Tibial artery (tissue), 4 donors: ENCODE measurements at regions of chr2 and their contacts with region 1.

Region 1: GRCh38 chr2:164560181-164560792 is 61.0 kb downstream of the GRB14 start:
- DNase-seq: no peak
- H3K4me3 ChIP-seq: peak overlapping the region in 1 of 2 donors; percentile 5
- H3K27ac ChIP-seq: no peak overlapping the region
- H3K4me1 ChIP-seq: peaks cover 0 to 8% (median 1%) of the 10 kb centered on the region in 4 donors
- H3K27me3 ChIP-seq: no peaks in the 10 kb centered on the region
- CTCF ChIP-seq: peak; percentile 65 to 69

Region 2: DNA sequence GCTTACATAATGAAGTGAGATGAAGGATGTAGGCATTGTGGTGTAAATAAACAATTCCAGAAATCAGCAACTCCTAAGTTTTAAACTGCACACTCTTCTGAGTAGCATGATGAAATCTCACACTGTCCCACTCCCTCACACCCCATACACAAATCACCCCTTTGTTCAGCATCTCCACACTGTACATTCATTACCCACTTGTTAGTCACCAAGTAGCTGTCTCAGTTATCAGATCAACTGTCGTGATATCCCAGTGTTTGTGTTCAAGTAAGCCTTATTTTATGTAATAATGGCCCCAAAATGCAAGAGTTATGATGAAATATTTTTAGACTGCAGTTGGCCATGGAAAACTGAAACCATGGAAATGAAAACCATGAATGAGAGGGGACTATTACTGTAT is 74.7 kb before region 1 on chr2:
- intact Hi-C with region 1: no loop called
- DNase-seq: no peak
- H3K4me3 ChIP-seq: no peak overlapping the region
- H3K27ac ChIP-seq: no peak overlapping the region
- H3K4me1 ChIP-seq: no peaks in the 10 kb centered on the region
- H3K27me3 ChIP-seq: no peaks in the 10 kb centered on the region
- CTCF ChIP-seq: no peak

Region 3: DNA sequence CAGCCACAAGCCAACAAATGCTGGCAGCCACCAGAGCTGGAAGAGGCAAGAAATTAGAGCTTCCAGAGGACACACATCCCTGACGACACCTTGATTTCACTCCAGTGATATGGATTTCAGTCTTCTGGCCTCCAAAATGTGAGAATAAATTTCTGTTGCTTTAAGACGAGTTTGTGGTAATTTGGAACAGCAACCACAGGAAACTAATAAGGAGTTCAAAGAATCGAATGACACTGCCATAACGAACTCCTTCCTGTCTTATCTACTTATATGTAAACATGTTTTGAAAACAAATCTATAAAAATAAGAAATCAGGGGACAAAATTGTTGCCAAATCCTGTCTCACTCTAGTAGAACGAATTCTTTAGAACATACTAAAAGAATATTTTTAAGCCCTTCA is 14.8 kb before region 1 on chr2:
- intact Hi-C with region 1: loop called (anchors 1 kb)
- DNase-seq: no peak
- H3K4me3 ChIP-seq: no peak overlapping the region
- H3K27ac ChIP-seq: no peak overlapping the region
- H3K4me1 ChIP-seq: no peaks in the 10 kb centered on the region
- H3K27me3 ChIP-seq: no peaks in the 10 kb centered on the region
- CTCF ChIP-seq: no peak

Region 4: DNA sequence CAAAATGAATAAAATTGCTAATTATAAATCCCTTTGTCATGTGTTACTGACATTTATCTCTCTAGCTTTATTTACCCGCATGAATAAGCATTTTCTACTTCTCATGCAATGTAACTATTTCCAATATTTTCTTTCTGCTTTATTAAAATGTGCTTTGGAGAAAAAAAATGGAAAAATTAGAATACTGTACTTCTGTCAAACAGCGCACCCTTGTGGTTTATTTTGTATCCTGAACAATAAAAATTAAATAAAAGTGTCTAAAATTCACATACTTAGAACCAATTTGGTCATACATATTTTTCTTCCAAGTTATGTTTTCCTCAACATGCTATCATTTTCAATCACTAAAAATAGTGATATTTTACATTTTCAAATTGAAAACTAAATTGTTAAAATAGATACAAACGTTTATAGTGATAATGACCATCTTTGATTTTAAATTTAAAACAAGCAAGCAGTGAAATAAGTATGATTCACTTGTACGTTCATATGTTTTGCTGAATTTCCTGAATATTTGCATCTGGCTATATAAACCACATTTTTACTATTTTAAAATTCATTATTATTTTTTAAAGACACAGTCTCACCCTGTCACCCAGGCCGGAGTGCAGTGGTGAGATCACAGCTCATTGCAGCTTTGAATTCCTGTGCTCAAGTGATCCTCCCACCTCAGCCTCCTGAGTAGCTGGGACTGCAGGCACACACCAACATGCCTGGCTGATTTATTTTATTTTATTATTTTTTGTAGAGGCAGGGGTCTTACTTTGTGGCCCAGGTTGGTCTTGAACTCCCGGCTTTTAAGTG is 156.9 kb after region 1 on chr2:
- intact Hi-C with region 1: loop called (anchors 10 kb)
- DNase-seq: no peak
- H3K4me3 ChIP-seq: no peak overlapping the region
- H3K27ac ChIP-seq: no peak overlapping the region
- H3K4me1 ChIP-seq: peaks cover 0 to 18% (median 2%) of the 10 kb centered on the region in 4 donors
- H3K27me3 ChIP-seq: no peaks in the 10 kb centered on the region
- CTCF ChIP-seq: peak; percentile 36 to 58

Region 5: GRCh38 chr2:164739966-164740365 is 179.7 kb after region 1 on chr2:
- intact Hi-C with region 1: no loop called
- DNase-seq: no peak
- H3K4me3 ChIP-seq: no peak overlapping the region
- H3K27ac ChIP-seq: peak overlapping the region; percentile 52 to 62
- H3K4me1 ChIP-seq: peaks cover 0 to 68% (median 17%) of the 10 kb centered on the region in 4 donors
- H3K27me3 ChIP-seq: no peaks in the 10 kb centered on the region
- CTCF ChIP-seq: no peak